ENCODE measurements at regions of chr3 and their contacts with region 1.

Region 1: GRCh38 chr3:105686278-105686897 is 182.4 kb downstream of the CBLB start:
- DNase-seq: no peak
- ATAC-seq: peak; percentile 27

Region 2: GRCh38 chr3:105868742-105869530 is 182.5 kb after region 1 on chr3 and contains the start of gene CBLB:
- intact Hi-C with region 1: loop called (anchors 10 kb)
- DNase-seq: peak; percentile 96
- ATAC-seq: peak; percentile 94
- total RNA-seq, gene CBLB: 60.3 TPM

Region 3: GRCh38 chr3:106206146-106206545 is 519.8 kb after region 1 on chr3:
- intact Hi-C with region 1: loop called (anchors 10 kb)
- DNase-seq: no peak
- ATAC-seq: peak; percentile 66

Region 4: GRCh38 chr3:106609666-106610301 is 923.4 kb after region 1 on chr3:
- intact Hi-C with region 1: loop called (anchors 10 kb)
- DNase-seq: no peak
- ATAC-seq: peak; percentile 87

Measured in left ventricle myocardium superior (tissue), 1 donor.